Endothelial cell of umbilical vein (primary cell): ENCODE measurements at regions of chr1 and their contacts with region 1.

Region 1: DNA sequence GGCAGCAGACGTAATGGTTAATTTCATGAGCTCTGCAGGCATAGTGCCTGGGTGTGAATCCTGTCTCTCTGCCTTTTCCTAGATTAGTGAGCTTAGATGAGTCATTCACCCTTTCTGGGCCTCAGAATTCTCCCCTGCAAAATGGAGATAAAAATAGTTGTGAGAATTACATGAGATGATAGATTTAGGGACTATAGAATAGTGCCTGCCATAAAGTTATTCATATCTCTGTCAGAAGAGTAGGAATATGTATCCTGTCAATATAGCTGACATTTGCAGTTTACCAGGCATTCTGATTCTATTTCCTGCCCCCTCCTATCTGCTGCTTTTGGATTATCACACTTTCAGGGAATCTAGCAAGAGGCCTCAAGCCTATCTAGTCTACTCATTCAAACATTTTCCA is 112.0 kb downstream of the PDE4B start:
- DNase-seq: no peak
- H3K4me3 ChIP-seq: no peak overlapping the region
- H3K27ac ChIP-seq: no peak overlapping the region
- H3K4me1 ChIP-seq: no peaks in the 10 kb centered on the region
- H3K27me3 ChIP-seq: peaks cover 0 to 3% of the 10 kb centered on the region in 2 experiments
- CTCF ChIP-seq: no peak
- POLR2A ChIP-seq: no peak

Region 2: GRCh38 chr1:65866439-65866838 is 38.2 kb before region 1 on chr1:
- CTCF ChIA-PET with region 1: no interaction called
- POLR2A ChIA-PET with region 1: no interaction called
- dilution Hi-C with region 1: no loop called
- intact Hi-C with region 1: loop called (anchors 1 kb)
- DNase-seq: no peak
- H3K4me3 ChIP-seq: no peak overlapping the region
- H3K27ac ChIP-seq: no peak overlapping the region
- H3K4me1 ChIP-seq: no peaks in the 10 kb centered on the region
- H3K27me3 ChIP-seq: peaks cover 0 to 4% of the 10 kb centered on the region in 2 experiments
- CTCF ChIP-seq: no peak
- POLR2A ChIP-seq: no peak

Region 3: DNA sequence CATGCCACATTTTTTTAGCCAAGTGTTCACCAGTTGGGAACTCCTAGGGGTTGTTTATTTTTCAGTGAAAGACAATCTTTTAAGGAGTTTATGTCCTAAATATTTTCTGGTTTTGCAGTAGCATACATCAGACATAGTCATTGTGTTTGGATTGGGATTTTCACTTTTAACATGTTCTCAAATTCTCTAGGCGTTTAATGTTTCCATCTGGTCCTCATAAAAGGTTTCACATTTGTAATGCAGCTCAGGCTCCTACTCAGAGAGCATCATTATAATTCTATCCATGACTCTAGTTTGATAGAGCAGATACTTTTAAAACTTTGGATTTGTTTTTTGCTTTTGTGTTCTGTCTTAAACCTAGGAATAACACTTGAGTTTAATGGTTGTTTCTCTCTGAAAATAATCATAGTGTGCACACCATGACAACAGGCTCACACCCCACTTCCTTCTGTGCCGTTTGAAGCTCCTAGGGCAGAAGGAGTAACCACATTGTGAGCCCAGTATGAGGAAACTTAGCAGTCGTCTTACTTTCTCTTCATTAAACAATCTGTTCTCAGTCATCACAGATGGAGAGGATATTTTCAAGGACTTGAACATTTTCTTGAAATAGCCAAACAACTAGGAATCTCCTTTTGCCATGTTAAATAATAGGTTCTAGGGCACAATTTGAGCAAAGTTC is 107.6 kb after region 1 on chr1:
- CTCF ChIA-PET with region 1: no interaction called
- POLR2A ChIA-PET with region 1: no interaction called
- dilution Hi-C with region 1: no loop called
- intact Hi-C with region 1: loop called (anchors 10 kb)
- DNase-seq: no peak
- H3K4me3 ChIP-seq: no peak overlapping the region
- H3K27ac ChIP-seq: no peak overlapping the region
- H3K4me1 ChIP-seq: no peaks in the 10 kb centered on the region
- H3K27me3 ChIP-seq: peaks cover 0 to 2% of the 10 kb centered on the region in 2 experiments
- CTCF ChIP-seq: no peak
- POLR2A ChIP-seq: no peak